ENCODE measurements at regions of chr20 and their contacts with region 1.

Region 1: GRCh38 chr20:54634835-54635234 is 159.4 kb downstream of the DOK5 start:
- DNase-seq: no peak
- H3K4me3 ChIP-seq: no peak overlapping the region
- H3K27ac ChIP-seq: no peak overlapping the region
- H3K4me1 ChIP-seq: no peaks in the 10 kb centered on the region
- H3K27me3 ChIP-seq: no peaks in the 10 kb centered on the region
- CTCF ChIP-seq: no peak
- POLR2A ChIP-seq: no peak

Region 2: DNA sequence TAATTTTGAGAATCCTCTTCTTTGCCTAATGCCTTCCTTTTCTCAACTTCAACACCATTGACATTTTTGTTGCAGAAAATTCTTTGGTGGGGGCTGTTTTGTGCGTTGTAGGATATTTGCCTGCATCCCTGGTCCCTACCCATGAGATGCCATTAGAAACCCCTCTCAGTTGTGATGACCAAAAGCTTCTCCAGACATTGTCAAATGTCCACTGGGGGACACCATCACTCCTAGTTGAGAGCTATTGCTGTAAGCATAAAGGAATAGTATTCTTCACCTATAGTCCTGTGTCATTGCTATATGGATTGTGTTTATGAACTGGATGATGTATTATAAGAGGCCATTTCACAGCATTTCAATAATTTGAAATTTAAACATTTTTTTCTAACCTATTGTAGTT is 101.8 kb before region 1 on chr20:
- intact Hi-C with region 1: no loop called
- DNase-seq: no peak
- H3K4me3 ChIP-seq: no peak overlapping the region
- H3K27ac ChIP-seq: no peak overlapping the region
- H3K4me1 ChIP-seq: no peaks in the 10 kb centered on the region
- H3K27me3 ChIP-seq: no peaks in the 10 kb centered on the region
- CTCF ChIP-seq: no peak
- POLR2A ChIP-seq: no peak

Region 3: GRCh38 chr20:54618412-54618811 is 16.4 kb before region 1 on chr20:
- intact Hi-C with region 1: loop called (anchors 1 kb)
- DNase-seq: no peak
- H3K4me3 ChIP-seq: no peak overlapping the region
- H3K27ac ChIP-seq: no peak overlapping the region
- H3K4me1 ChIP-seq: no peaks in the 10 kb centered on the region
- H3K27me3 ChIP-seq: no peaks in the 10 kb centered on the region
- CTCF ChIP-seq: no peak
- POLR2A ChIP-seq: no peak

Region 4: GRCh38 chr20:55031971-55032370 is 397.1 kb after region 1 on chr20:
- intact Hi-C with region 1: loop called (anchors 5 kb)
- DNase-seq: no peak
- H3K4me3 ChIP-seq: no peak overlapping the region
- H3K27ac ChIP-seq: no peak overlapping the region
- H3K4me1 ChIP-seq: no peaks in the 10 kb centered on the region
- H3K27me3 ChIP-seq: no peaks in the 10 kb centered on the region
- CTCF ChIP-seq: no peak
- POLR2A ChIP-seq: no peak